ENCODE measurements at regions of chr6 and their contacts with region 1.

Region 1: GRCh38 chr6:33248925-33249731 is 22.5 kb downstream of the VPS52 start:
- DNase-seq: peak; percentile 88
- H3K4me3 ChIP-seq: peak overlapping the region; percentile 62 to 76
- H3K27ac ChIP-seq: peak overlapping the region; percentile 96
- H3K4me1 ChIP-seq: peaks cover 21 to 30% of the 10 kb centered on the region in 2 experiments
- H3K27me3 ChIP-seq: no peaks in the 10 kb centered on the region
- CTCF ChIP-seq: no peak
- EP300 ChIP-seq: no peak
- RAD21 ChIP-seq: no peak

Region 2: DNA sequence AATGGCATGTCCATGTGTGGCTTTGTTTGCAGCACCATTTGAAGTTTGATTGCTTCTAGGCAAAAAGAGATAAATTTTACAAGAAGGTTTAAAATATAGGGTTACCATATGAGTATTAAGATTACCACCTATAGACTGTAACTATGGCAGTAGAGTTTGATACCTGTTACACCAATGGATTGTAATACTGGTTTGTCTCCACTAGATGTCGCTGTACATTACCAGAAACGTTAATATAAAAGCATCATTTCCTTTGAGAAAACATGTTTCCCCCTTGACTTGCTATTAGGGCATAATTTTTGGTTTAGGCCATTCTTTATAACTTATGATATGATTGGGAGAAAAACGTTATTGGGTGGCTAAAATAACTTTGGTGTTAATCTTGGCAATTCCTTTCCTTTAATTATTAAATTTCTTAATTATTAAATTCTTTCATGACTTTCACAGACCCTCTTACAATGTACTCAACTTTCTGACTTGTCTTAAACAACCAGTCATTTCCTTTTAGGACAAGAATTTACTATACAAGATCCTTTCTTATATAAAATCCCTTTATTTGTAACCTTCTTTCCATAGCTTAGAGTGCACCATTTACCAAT is 130.5 kb before region 1 on chr6:
- CTCF ChIA-PET with region 1: interaction called, 45 read pairs
- POLR2A ChIA-PET with region 1: interaction called, 3 read pairs
- DNase-seq: peak; percentile 46
- H3K4me3 ChIP-seq: peak overlapping the region in 1 of 2 experiments; percentile 43; a peak in 1 of 4 replicates
- H3K27ac ChIP-seq: no peak overlapping the region
- H3K4me1 ChIP-seq: no peaks in the 10 kb centered on the region; a peak in 1 of 4 replicates
- H3K27me3 ChIP-seq: peaks cover 42% of the 10 kb centered on the region; the same call in 1 of the 2 replicates
- CTCF ChIP-seq: peak; percentile 88
- EP300 ChIP-seq: no peak
- RAD21 ChIP-seq: peak; percentile 68

Region 3: DNA sequence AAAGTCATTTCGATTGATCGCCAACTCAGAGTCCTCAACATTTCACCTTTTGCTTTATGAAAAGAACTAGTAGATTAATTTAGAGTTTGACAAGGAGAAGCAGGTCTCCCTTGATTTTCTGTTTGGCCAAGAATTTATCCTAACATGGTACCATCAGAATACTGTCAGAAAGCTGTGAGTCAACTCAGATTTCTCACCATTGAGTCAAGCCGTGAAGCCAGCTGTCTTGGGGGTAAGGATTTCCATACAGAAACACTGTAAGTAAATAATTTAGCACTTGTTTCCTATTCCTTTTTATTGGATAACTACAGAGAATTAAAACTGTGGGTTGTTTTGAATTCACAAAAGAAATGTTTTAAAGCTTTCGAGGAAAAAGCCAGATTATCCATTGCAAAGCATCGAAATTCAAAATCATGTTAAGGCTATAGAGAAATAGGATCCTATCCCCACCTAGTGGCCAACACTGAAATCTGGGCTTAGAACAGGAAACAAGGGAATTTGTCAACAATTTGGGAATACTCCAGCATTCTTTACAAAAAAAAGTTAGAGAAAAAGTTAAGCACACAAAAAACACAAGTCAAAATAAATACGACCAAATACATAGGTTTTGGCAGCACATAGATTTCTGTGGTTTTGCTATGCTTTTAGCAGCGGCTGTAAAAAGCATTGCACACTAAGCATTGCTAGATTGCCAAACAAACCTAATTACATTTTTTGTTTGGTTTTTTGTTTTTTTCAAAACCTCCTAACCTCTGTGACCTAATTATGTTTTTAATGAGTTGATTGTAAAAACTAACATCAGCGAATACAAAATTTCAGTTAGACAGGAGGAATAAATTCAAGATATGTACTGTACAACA is 101.1 kb before region 1 on chr6:
- CTCF ChIA-PET with region 1: interaction called, 34 read pairs
- POLR2A ChIA-PET with region 1: no interaction called
- DNase-seq: peak; percentile 63
- H3K4me3 ChIP-seq: no peak overlapping the region
- H3K27ac ChIP-seq: no peak overlapping the region
- H3K4me1 ChIP-seq: no peaks in the 10 kb centered on the region
- H3K27me3 ChIP-seq: peaks cover 30% of the 10 kb centered on the region
- CTCF ChIP-seq: peak; percentile 92
- EP300 ChIP-seq: no peak
- RAD21 ChIP-seq: peak; percentile 77

Region 4: DNA sequence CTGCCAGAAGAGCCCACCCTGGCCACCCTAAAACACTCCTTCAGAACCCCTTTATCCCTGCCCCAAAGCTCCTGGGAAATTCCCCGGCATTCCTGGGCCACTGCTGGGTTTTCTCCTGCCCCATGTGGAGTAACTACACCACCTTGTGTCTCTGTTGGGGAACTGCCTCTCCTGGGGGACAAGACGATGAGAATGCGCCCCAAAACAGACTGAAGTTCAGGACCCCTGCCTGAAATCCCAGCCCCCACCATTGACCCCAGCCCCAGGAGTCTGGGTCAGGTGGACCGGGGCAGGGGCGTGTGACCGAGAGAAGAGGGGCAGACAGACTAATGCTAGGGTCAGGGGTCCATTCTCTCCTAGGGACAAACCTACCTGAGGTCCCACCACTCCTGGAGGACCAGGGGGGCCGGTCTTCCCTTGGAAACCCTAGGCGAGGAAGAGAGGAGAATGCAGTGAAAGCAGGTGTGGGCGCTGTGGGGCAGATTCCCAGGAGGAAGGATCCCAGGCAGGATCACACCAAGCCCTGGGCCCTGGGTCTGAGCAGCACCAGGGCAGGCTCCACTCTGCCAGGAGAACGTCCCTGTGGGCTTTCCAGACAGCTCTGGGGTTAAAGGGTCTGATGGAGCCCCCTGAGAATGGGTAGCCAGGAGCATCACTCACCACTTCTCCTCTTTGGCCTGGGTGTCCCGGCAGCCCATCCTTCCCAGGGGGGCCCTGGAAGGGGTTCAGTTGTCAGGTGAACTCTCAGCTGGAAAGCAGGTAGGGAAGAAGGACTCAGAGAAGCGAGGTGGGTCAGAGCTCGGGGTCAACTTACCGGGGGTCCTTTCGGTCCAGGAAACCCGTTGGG is 76.2 kb before region 1 on chr6:
- CTCF ChIA-PET with region 1: interaction called, 19 read pairs
- POLR2A ChIA-PET with region 1: no interaction called
- DNase-seq: no peak
- H3K4me3 ChIP-seq: no peak overlapping the region
- H3K27ac ChIP-seq: no peak overlapping the region
- H3K4me1 ChIP-seq: peaks cover 0 to 3% of the 10 kb centered on the region in 2 experiments; a peak in 1 of 4 replicates
- H3K27me3 ChIP-seq: no peaks in the 10 kb centered on the region
- CTCF ChIP-seq: peak; percentile 54
- EP300 ChIP-seq: no peak
- RAD21 ChIP-seq: peak; percentile 60

Region 5: DNA sequence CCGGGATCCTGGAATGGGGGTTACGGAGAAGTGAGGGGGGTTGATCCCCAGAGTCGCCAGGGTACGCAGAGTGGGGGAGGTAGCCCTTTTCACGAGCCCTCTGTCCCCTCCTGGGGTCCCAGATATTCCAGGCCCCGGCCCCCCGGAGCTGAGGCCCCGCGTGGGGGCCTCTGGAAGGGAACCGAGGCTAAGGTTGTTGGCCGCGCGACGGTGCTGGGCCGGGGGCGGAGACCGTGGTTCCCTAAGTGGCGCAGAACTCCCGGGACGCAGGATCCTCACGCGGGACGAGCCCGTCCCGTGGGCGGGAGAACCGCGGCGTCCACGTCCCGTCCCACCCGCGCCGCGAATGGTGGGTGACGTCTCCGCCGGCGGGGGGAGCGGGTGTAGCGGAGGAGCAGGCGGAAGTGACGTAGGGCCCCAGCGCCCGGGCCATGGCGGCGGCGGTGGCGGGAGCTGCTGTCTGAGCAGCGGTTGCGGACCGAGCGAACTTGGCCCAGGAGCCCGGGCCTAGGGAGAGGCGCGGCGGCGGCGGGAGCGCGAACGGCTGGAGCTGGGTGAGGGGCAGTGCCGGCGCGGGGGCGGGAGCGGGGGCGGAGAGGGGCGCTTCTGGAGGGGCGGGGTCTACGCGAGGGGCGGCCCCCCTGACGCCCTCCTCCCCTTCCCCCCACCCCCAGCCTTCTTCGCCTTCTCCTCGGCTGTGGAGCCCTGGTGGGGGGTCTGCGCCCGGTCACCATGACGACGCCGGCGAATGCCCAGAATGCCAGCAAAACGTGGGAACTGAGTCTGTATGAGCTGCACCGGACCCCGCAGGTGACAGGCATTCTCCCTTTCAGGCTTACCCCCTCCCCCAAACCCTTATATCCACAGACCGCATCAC is 40.8 kb before region 1 on chr6 and contains the start of gene RING1:
- CTCF ChIA-PET with region 1: interaction called, 16 read pairs
- POLR2A ChIA-PET with region 1: interaction called, 18 read pairs
- DNase-seq: peak; percentile 96
- H3K4me3 ChIP-seq: peak within 1 kb of the TSS; percentile 90 to 94
- H3K27ac ChIP-seq: peak within 1 kb of the TSS; percentile 88 to 91
- H3K4me1 ChIP-seq: peaks cover 20 to 42% of the 10 kb centered on the region in 2 experiments; a peak in 3 of 4 replicates
- H3K27me3 ChIP-seq: no peaks in the 10 kb centered on the region
- CTCF ChIP-seq: no peak
- EP300 ChIP-seq: no peak
- RAD21 ChIP-seq: no peak
- polyA plus RNA-seq, gene RING1: 55.1 and 61.3 TPM in 2 replicates

Region 6: GRCh38 chr6:33271458-33272274 is 22.5 kb after region 1 on chr6 and contains the starts of genes RPS18 and VPS52:
- CTCF ChIA-PET with region 1: interaction called, 18 read pairs
- POLR2A ChIA-PET with region 1: interaction called, 14 read pairs
- DNase-seq: peak; percentile 89
- H3K4me3 ChIP-seq: peak within 1 kb of the TSS; percentile 76 to 91
- H3K27ac ChIP-seq: peak within 1 kb of the TSS; percentile 88 to 99
- H3K4me1 ChIP-seq: peaks cover 30 to 39% of the 10 kb centered on the region in 2 experiments; a peak in 3 of 4 replicates
- H3K27me3 ChIP-seq: no peaks in the 10 kb centered on the region
- CTCF ChIP-seq: no peak
- EP300 ChIP-seq: no peak
- RAD21 ChIP-seq: no peak
- polyA plus RNA-seq, gene RPS18: 12,112 and 13,423 TPM in 2 replicates
- polyA plus RNA-seq, gene VPS52: 74.0 and 90.7 TPM in 2 replicates

Measured in SK-N-SH (cell line).